ENCODE measurements at regions of chr11 and their contacts with region 1.

Region 1: DNA sequence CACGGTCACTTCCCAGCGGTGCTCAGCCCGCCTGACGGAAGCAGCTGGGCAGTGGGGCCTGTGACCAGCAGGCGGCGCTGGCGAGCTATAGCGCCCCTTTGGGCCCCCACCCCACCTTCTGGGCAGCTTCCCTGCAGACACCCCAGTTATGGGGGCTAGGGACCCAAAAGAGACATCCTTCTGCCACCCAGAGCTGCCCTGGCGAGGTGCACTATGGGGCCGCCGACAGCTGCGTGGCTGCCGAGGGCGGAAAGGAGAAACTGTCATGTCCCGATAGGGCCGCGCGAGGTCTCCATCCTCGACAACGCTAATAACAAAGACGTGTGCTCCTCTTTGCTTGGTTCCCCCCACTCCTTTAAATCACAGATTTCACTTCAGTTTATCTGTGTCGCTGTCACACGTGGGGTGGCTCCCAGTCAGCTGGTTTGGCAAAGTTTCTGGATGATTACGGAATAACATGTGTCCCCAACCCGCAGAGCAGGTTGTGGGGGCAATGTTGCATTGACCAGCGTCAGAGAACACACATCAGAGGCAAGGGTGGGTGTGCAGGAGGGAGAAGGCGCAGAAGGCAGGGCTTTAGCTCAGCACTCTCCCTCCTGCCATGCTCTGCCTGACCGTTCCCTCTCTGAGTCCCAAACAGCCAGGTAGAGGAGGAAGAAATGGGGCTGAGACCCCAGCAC is 674 bp upstream of the MYO7A start:
- DNase-seq: peak; percentile 36 to 63
- ATAC-seq: peak; percentile 67 to 89
- H3K4me3 ChIP-seq: peak overlapping the region; percentile 37
- H3K27ac ChIP-seq: peak overlapping the region in 1 of 2 experiments; percentile 61; a peak in 3 of 6 replicates
- H3K4me1 ChIP-seq: no peaks in the 10 kb centered on the region
- CTCF ChIP-seq: peak; percentile 99
- EP300 ChIP-seq: no peak
- POLR2A ChIP-seq: no peak
- RAD21 ChIP-seq: peak; percentile 69 to 86

Region 2: DNA sequence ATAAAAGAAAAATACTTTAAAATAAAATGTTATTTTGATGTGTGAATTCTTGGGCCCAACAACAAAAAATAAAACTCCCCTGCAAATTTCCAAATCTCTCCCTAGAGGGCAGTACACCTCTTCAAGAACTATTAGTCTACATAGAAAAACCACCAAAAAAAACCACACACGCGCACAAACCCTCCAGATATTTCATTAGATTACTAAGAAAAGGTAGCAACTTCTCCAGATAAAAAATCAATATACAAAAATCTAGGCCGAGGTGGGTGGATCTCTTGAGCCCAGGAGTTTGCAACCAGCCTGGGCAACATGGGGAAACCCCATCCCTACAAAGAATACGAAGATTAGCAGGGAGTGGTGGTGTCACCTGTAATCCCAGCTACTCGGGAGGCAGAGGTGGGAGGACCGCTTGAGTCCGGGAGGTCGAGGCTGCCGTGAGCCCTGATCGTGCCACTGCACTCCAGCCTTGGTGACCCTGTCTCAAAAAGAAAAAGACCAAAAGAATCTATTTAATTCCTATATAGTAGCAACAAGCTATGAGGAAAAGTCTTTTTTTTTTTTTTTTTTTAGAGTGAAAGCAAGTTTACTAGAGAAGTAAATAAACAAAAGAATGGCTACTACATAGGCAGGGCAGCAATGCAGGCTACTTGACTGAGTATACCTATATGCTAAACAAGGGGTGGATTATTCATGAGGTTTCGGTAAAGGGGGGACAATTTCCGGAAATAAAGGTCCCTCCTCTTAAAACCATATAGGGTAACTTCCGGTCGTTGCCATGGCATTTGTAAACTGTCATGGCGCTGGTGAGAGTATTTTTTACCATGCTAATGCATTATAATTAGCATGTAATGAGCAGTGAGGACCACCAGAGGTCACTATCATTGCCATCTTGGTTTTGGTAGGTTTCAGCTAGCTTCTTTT is 80.1 kb before region 1 on chr11:
- CTCF ChIA-PET with region 1: interaction called, 13 read pairs
- POLR2A ChIA-PET with region 1: no interaction called
- DNase-seq: peak; percentile 69 to 95
- ATAC-seq: peak; percentile 80 to 88
- H3K4me3 ChIP-seq: peak overlapping the region; percentile 55
- H3K27ac ChIP-seq: peak overlapping the region; percentile 64
- H3K4me1 ChIP-seq: peaks cover 12% of the 10 kb centered on the region; the same call in 2 of the 3 replicates
- CTCF ChIP-seq: peak; percentile 93
- EP300 ChIP-seq: no peak
- POLR2A ChIP-seq: no peak
- RAD21 ChIP-seq: peak; percentile 71 to 86

Region 3: GRCh38 chr11:77113382-77114088 is 13.8 kb before region 1 on chr11:
- CTCF ChIA-PET with region 1: interaction called, 60 read pairs
- POLR2A ChIA-PET with region 1: no interaction called
- DNase-seq: peak; percentile 52 to 82
- ATAC-seq: peak; percentile 31 to 73; a peak in 3 of 6 replicates
- H3K4me3 ChIP-seq: no peak overlapping the region
- H3K27ac ChIP-seq: peak overlapping the region in 1 of 2 experiments; percentile 48; a peak in 2 of 6 replicates
- H3K4me1 ChIP-seq: peaks cover 31% of the 10 kb centered on the region
- CTCF ChIP-seq: peak; percentile 73
- EP300 ChIP-seq: no peak
- POLR2A ChIP-seq: no peak
- RAD21 ChIP-seq: peak; percentile 59 to 62

Region 4: DNA sequence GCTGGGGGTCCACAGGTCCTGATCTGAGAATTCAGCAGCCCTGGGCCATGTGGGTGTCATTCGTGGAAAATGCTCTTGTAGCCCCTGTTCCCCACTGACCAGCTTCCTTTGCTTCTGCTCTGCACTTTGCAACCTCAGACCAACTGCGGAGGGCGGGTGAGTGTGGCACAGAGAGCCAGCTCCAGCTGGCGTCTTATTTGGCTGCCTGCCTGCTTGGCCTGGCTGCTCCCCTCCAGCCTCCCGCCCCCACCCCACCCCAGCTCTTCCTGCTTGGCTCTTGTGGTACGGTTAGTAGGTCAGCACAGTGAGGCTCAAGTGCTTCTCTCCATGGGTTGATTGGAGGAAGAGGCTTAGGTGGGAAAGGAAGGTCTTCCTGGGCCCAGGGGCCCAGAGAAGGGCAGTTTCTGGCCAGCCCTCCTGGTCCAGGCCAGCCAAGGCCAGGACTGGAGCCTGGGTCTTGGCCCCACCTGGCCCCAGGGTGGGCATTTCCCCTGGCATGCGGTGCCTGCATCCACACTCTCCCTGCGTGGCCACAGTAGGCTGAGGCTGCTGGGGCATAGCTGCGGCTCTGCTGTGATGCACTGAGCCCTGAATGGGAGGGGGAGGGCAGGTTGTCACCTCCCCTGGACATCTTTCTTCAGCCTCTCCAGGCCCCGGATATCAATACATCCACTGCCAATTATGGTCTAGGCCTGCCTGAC is 27.2 kb after region 1 on chr11:
- CTCF ChIA-PET with region 1: interaction called, 17 read pairs
- POLR2A ChIA-PET with region 1: no interaction called
- DNase-seq: no peak
- ATAC-seq: no peak
- H3K4me3 ChIP-seq: no peak overlapping the region
- H3K27ac ChIP-seq: no peak overlapping the region
- H3K4me1 ChIP-seq: no peaks in the 10 kb centered on the region
- CTCF ChIP-seq: no peak
- EP300 ChIP-seq: no peak
- POLR2A ChIP-seq: no peak
- RAD21 ChIP-seq: no peak

Region 5: GRCh38 chr11:77187776-77188632 is 60.6 kb after region 1 on chr11:
- CTCF ChIA-PET with region 1: interaction called, 161 read pairs
- POLR2A ChIA-PET with region 1: no interaction called
- DNase-seq: peak; percentile 77 to 94
- ATAC-seq: peak; percentile 36 to 64; a peak in 3 of 6 replicates
- H3K4me3 ChIP-seq: no peak overlapping the region
- H3K27ac ChIP-seq: no peak overlapping the region
- H3K4me1 ChIP-seq: no peaks in the 10 kb centered on the region
- CTCF ChIP-seq: peak; percentile 93
- EP300 ChIP-seq: no peak
- POLR2A ChIP-seq: no peak
- RAD21 ChIP-seq: peak; percentile 78

Region 6: DNA sequence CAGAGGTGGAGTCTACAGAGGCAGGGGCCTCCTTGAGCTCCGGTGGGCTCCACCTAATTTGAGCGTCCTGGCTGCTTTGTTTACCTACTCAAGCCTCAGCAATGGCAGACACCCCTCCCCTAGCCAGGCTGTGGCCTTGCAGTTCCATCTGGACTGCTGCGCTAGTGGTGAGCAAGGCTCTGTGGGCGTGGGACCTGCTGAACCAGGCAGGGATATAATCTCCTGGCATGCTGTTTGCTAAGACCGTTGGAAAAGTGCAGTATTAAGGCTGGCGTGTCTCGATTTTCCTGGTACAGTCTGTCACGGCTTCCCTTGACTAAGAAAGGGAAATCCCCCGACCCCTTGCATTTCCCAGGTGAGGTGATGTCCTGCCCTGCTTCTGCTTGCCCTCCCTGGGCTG is 96.4 kb after region 1 on chr11:
- CTCF ChIA-PET with region 1: no interaction called
- POLR2A ChIA-PET with region 1: no interaction called
- DNase-seq: no peak
- ATAC-seq: no peak
- H3K4me3 ChIP-seq: no peak overlapping the region
- H3K27ac ChIP-seq: no peak overlapping the region
- H3K4me1 ChIP-seq: no peaks in the 10 kb centered on the region
- CTCF ChIP-seq: no peak
- EP300 ChIP-seq: no peak
- POLR2A ChIP-seq: no peak
- RAD21 ChIP-seq: no peak

Region 7: DNA sequence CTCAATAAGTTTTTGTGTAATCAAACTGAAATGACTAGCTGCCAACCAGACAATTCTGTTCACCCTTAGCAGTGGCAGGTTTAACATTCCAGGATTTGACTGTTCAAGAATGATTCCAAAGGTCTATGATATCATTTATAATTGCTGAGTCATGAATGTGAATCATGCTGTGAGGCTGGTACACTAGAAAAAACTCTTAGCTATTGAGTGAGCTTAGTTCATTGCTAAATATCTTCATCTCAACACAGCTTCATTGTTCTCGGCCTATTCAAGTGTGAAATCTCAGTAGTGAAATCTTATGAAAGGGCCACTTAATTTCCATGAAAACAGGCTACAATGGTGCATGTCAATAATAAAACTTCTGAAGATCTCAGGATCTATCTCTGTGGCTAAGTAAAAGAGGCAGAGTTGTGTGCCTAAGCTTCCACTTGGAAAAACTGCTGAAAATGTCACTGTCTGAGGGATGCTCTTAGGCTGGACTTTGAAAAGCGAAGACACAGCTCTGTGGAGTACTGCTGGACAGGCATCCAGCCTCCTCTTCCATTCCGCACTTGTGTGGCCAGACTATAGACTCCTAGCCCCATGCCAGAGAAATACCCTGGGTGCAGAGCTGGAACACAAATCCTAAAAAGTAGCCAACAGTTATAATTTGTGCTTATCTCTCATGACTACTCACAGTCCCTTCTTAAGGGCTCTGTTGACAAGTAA is 475.2 kb after region 1 on chr11:
- CTCF ChIA-PET with region 1: interaction called, 10 read pairs
- POLR2A ChIA-PET with region 1: no interaction called
- DNase-seq: peak; percentile 42 to 72
- ATAC-seq: peak; percentile 90 to 92
- H3K4me3 ChIP-seq: peak overlapping the region; percentile 8; the same call in 1 of the 3 replicates
- H3K27ac ChIP-seq: peak overlapping the region; percentile 89 to 91
- H3K4me1 ChIP-seq: peaks cover 36% of the 10 kb centered on the region
- CTCF ChIP-seq: no peak
- EP300 ChIP-seq: no peak
- POLR2A ChIP-seq: no peak
- RAD21 ChIP-seq: no peak